ENCODE measurements at regions of chr17 and their contacts with region 1.

Region 1: GRCh38 chr17:56373981-56374833 is 219.3 kb upstream of the NOG start:
- DNase-seq: no peak
- ATAC-seq: no peak
- H3K4me3 ChIP-seq: no peak overlapping the region
- H3K4me1 ChIP-seq: no peaks in the 10 kb centered on the region
- CTCF ChIP-seq: no peak

Region 2: DNA sequence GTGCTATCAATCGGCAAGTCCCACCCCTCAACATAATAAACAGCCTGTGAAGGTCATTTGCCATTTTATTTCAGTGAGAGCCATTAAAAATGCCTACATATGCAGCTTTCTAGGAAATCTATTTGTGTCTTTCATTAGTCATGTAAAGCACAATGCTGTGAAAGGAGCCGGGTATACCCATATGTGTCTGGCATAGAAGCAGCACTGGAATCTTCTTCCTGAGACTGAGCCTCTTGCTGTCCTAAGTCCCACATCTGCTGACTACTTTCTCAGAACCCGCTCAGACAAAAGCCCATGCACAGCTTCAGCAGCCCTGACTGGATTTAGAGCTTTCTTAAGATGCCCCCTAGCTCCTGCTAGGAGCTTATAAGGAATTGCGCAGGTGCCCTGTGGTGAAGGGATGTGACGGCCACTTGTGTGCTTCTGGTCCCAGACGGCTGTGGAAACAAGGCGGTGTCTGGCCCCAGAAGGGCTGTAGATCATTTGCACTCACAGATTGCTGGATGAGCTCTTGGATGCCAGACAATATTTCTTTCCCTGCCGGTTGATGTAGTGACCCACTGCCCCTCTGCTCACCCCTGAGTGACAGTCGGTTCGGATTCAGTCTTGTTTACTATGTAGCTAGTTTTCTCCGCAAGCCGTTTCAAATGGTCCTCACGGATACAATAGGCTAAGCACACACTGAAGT is 48.8 kb before region 1 on chr17:
- intact Hi-C with region 1: loop called in 1 of 2 experiments (anchors 5 kb)
- DNase-seq: no peak
- ATAC-seq: no peak
- H3K4me3 ChIP-seq: no peak overlapping the region
- H3K4me1 ChIP-seq: no peaks in the 10 kb centered on the region
- CTCF ChIP-seq: no peak